Right ventricle myocardium inferior (tissue), 1 donor: ENCODE measurements at regions of chr7 and their contacts with region 1.

Region 1: DNA sequence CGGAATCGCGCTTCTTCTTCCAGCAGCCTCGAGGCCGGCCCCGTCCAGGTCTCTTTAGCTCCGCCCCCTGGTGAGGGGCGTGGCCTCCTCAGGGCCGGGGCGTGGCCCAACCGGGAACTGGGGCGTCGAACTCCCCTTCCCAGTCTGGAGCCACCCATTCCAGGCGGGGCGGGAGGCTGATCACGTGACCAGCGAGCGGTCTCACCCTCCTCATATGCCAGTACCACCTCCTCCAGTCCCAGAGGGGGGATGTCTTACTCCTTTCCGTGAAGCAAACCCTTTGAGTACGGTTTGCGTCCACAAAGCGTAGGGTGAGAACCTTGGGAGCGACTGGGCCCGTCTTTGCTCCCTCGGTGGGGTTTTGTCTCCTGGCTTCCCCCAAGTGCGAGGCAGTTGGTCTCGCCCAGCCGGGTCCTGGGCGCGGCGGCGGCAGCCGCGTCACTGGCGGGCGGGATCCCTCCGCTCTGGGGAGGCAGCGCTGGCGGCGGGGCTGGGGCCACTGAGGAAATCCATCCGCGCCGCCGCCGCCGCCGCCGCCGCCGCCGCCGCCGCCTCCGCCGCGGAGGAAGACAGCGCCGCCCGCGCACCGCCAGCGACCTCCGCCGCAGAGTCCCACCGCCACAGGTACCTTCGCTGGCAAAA is at the start of gene GNB2:
- DNase-seq: peak; percentile 100
- ATAC-seq: peak; percentile 93
- total RNA-seq, gene GNB2: 120 TPM

Region 2: DNA sequence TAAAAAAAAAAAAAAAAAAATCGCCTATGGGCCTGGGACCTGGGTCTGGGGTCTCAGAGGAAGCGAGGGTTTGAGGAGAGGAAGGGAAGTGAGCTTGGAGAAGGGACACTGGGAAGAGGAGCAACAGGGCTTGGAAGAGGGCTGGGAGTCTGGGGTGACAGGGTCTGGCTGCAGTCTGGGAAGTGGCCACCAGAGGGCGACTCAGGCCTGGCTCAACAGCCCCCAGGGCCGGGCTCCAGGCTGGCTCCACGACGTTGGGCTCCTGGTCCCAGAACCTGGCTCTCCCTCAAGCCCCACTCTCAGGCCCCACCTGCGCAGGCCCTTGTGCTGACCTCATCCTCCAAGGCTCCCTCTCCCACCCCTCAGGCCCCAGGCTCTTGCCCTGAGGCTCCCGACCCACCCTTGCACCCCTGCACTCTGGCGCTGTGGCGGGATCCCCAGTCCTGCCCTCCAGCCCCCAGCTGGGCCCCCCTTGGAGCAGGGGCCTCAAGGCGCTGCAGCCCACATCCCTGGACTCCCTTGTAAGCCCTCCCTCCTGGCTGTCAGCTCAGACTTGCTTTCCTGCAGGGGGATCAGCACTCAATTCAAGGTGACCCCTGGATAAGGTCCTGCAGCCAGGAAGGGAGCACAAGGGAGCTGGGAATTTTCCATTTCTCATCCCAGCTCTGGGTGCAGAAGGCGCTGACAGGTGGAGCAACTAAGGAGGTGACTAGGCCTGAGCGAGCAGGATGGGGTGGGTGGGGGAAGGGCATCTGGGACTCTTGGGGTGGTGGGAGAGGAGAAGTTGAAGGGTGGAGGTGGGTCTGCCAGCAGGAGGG is 204.0 kb before region 1 on chr7:
- intact Hi-C with region 1: loop called (anchors 5 kb)
- DNase-seq: peak; percentile 93
- ATAC-seq: peak; percentile 73

Region 3: DNA sequence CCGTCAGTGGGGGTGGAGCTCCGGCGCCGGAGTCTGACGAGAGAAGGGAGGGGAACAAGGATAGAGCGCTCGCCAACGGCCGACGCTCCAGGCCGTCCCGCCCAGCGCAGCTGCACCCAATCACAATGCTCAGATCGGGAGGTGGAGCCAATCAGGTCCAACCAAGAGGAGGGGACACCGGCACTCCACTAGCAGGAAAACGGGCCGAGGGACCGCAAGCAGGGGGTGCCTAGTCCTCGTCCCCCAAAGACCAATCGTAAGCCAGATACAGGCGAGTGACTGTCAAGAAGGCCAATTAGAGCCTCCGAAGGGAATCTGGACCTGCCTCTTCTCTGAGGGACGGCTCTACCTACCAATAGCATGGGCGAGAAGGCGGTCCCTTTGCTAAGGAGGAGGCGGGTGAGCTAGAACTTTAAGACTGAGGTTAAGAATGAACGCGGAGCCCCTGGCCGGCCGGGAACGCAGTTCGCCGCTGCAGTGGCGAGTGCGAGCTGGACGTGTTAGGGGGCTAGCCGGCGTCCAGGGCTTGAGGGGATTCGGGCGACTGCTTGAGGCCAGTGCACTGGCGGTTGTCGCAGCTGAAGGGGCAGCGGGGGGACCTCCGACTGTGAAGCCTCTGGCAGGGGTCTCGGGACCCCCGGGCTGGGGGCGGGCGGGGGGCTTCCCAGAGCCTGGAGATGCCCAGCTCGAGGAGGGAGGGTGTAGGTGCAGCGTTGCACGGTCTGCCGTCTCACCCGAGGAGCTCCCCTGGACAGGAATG is 87.0 kb before region 1 on chr7 and contains the start of gene FBXO24:
- intact Hi-C with region 1: loop called (anchors 5 kb)
- DNase-seq: peak; percentile 100
- ATAC-seq: peak; percentile 93
- total RNA-seq, gene FBXO24: 0.41 TPM

Region 4: DNA sequence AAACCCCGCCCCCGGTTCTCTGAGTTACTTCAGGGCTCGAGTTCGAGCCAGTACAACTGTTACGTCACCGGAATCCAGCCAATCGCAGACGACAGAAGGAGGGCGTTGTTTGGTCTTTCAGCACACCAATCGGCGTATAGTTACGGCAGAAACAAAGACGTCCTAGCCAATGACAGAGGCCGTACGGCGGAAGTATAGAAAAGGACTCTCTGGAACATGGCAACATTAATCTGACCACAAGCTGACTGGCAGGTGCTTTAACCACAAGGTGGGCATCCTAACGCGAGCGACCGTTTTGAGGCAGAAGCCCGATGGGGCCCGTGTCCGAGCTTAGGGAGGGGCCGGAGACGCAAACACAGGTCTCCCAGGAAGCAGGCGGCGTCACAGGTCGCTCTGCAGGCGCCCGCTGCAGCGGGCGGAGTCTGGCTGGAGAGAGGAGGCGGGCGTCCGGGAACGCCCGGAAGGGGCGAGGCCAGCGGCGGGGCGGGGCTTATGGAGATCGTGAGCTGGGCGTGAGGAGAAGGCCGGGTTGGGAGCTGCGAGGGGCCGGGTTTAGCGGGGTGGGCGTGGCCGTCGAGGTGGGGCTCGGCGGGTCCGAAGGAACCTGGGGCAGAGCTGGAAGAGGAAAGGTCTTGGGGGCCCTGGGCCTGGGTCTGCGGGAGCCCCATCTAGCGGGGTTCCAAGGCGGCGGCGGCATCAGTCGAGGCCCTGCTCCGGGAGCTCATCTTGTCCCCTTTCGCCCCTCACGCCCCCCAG is 61.3 kb before region 1 on chr7 and contains the start of gene MOSPD3:
- intact Hi-C with region 1: loop called (anchors 1 kb)
- DNase-seq: peak; percentile 98
- ATAC-seq: peak; percentile 97
- total RNA-seq, gene MOSPD3: 9.3 TPM

Region 5: DNA sequence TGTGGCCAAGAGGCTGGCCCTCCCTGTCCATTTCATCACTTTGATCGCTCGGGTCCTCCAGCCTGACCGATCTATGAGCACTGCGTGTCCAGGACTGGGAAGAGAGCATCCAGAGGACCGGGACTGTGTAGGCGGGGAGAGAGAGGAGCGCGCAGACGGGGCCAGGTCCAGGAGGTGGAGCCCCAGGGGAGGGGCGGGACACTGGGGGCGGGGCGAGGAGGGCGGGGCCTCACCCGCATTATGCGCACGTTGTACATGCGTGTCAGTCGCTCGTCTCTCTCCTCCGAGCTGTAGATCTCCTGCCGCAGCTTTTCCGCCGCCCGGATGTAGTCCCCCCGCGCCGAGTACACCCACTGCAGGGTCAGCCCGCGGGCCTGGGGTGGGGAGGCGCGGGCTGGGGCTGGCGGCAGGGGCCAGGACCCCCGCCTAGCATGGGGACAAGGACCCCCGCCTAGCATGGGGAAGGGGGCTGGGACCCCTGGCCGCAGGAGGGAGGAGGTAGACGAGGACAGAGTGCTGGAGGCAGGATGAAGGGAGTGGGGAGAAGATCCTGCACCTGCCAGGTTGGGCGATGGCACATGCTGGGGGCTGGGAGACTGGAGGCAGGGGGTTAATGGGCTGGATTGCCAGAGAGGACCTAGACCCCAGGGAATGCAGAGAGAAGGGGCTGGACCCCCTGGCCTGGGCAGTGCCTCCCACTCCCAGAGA is 46.7 kb before region 1 on chr7:
- intact Hi-C with region 1: loop called (anchors 5 kb)
- DNase-seq: peak; percentile 89
- ATAC-seq: peak; percentile 97